Tibial artery (tissue), 4 donors: ENCODE measurements at regions of chr4 and their contacts with region 1.

Region 1: DNA sequence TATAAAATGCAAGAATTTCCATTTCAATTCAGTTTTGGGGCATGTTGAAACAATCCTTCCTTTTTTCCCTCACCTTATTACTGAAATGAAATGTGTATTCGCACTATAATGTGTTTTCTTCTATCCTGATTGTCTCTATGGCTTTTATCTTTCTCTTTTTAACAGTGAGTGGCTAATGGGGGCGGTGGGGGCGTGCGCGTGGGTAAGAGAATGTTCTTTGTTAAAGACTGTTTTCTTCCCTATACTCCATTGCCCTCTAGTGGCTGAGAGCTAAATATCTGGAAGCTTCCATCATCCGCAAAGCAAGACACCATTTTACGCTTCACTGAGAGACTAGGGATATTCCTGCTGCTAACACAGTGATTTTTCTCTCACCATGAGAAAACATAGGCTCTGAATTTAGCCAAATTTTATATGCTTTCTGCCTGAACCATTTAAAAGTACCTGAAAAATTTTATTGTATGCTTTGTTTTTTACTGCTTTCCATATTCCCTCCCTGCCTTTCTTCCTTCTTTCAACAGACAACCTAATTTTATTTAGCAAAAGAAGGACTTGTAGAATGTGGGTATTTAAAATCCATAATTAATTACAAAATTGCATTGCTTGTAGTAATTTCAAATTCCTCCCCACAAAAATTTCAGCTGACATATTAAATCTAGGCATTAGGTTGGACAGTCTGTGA is 194.0 kb downstream of the GASK1B start:
- DNase-seq: peak in 1 of 2 donors; percentile 23
- H3K4me3 ChIP-seq: no peak overlapping the region
- H3K27ac ChIP-seq: no peak overlapping the region
- H3K4me1 ChIP-seq: peaks cover 0 to 11% (median 0%) of the 10 kb centered on the region in 4 donors
- H3K27me3 ChIP-seq: no peaks in the 10 kb centered on the region
- CTCF ChIP-seq: peak; percentile 79 to 85

Region 2: DNA sequence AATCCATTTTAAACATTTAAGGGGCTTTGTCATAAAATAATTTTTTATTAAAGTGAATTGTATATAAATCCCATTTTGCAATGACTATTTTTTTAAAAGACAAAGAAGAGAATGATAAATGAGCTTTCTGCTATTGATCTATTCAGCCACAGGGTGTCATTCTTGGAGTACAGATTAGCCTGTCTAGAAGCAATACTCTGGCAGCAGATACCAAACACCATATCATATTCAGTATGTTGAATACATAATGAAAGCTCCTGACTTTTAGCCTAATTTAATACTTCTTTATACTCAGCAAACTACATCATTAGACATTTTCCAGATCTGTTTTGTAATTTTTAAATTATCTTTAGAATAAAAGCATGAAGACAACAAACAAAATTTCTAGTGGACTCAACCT is 1503.5 kb before region 1 on chr4:
- intact Hi-C with region 1: loop called (anchors 10 kb)
- DNase-seq: no peak
- H3K4me3 ChIP-seq: no peak overlapping the region
- H3K27ac ChIP-seq: peak overlapping the region; percentile 52 to 55
- H3K4me1 ChIP-seq: peaks cover 0 to 13% (median 2%) of the 10 kb centered on the region in 4 donors
- H3K27me3 ChIP-seq: no peaks in the 10 kb centered on the region
- CTCF ChIP-seq: peak; percentile 64 to 70

Region 3: GRCh38 chr4:157217708-157218107 is 761.1 kb before region 1 on chr4:
- intact Hi-C with region 1: loop called (anchors 5 kb)
- DNase-seq: no peak
- H3K4me3 ChIP-seq: no peak overlapping the region
- H3K27ac ChIP-seq: no peak overlapping the region
- H3K4me1 ChIP-seq: peaks cover 0 to 25% (median 16%) of the 10 kb centered on the region in 4 donors
- H3K27me3 ChIP-seq: peaks cover 0 to 25% of the 10 kb centered on the region in 2 donors
- CTCF ChIP-seq: peak; percentile 50 to 51

Region 4: GRCh38 chr4:157591245-157591644 is 387.6 kb before region 1 on chr4:
- intact Hi-C with region 1: no loop called
- DNase-seq: no peak
- H3K4me3 ChIP-seq: no peak overlapping the region
- H3K27ac ChIP-seq: no peak overlapping the region
- H3K4me1 ChIP-seq: peaks cover 0 to 21% (median 0%) of the 10 kb centered on the region in 4 donors
- H3K27me3 ChIP-seq: no peaks in the 10 kb centered on the region
- CTCF ChIP-seq: no peak

Region 5: DNA sequence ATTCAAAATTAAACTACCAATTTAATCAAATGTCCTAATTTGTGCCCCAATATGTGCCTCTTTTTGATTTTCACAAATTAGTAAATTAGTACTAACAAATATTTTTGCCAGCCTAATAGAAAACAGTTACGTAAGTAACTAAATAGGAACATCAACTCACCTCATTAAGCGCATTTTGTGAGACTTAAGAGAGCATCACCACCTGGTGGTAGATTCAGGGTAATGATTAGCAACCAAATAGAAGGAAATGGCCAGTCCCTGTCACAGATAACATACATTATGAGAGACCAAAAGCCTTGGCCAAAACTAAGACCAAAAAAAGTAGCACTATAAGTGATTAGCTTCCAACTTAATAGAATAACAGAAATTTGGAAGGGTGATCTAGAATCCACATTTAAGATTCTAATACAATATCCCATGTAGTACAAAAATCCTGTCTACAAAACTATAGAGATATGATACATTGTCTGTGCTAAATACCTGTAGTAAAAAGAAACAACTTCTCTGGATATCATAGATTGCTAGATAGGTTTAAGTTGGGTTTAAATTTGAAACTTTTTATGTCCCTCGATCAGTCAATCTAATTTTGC is 646.2 kb after region 1 on chr4:
- intact Hi-C with region 1: loop called (anchors 10 kb)
- DNase-seq: no peak
- H3K4me3 ChIP-seq: no peak overlapping the region
- H3K27ac ChIP-seq: peak overlapping the region in 1 of 2 donors; percentile 18
- H3K4me1 ChIP-seq: peaks cover 0 to 16% (median 0%) of the 10 kb centered on the region in 4 donors
- H3K27me3 ChIP-seq: no peaks in the 10 kb centered on the region
- CTCF ChIP-seq: peak; percentile 69 to 87